Transverse colon (tissue), 4 donors: ENCODE measurements at regions of chr11 and their contacts with region 1.

Region 1: DNA sequence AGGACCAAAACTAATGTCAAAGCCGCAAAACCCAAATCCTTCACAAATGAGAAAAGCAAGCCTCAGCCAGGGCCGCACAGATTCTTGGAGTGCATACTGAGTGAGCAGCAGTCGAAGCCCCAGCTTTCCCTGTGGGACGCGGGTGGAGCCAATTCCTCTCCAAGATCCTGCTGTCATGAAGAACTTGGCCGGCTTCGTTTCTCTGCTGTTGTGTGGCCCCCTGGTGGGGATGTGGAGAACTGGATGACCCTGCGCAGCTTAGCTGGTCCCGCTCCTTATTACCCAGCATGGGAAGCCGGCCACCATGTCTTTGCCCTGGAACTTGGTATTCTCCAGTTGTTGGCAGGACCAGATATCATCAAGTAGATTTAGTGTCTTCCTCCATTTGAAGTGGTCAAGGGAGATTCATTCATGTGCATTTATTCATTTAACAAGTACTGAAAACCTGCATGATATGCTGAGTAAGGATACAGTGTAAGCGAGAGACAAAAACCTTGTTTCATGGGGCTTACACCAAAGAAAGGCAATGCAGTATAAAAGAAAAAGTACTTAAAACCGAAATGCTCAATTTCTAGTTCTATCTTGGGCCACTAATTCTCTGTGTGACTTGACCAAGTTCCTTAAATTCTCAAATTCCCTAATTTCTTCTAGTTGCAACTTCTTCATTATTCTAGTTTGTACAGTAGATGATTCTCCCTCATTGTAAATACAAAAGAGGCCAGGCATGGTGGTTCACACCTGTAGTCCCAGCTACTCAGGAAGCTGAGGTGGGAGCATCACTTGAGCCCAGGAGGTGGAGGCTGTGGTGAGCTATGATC is 56.7 kb upstream of the CRTAM start:
- DNase-seq: peak; percentile 85
- H3K4me3 ChIP-seq: no peak overlapping the region
- H3K27ac ChIP-seq: no peak overlapping the region
- H3K4me1 ChIP-seq: peaks cover 0 to 6% (median 0%) of the 10 kb centered on the region in 4 donors
- H3K27me3 ChIP-seq: no peaks in the 10 kb centered on the region
- CTCF ChIP-seq: peak; percentile 89 to 91 (median 89)
- EP300 ChIP-seq: no peak
- POLR2A ChIP-seq: no peak

Region 2: DNA sequence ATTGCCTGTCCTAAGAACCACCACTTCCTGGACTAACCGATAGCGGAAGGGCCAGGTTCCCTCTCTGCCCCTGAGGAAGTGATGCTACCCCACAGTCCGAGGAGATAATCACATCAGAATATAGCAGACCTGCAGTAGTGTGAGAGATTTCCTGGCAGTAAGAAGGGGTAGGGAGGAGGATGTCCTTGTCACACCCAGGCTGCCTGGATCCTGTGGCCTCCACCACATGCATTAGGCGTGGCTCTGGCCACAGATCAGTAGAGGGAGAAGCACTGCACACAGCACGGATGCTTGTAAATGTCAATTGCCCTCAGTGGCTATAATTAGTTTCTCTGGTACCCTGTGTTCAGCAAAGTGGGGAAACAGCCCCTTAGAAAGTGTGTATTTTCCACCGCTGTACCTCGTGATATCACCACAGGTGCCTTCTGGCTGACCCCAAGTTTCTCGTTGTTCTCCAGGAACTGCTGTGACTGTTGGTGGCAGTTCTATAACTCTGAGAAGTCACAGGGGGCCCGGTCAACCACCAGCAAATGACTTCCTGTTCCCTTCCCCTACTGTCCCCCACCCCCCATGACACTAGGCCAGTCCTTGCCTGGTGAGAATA is 64.2 kb before region 1 on chr11:
- in situ Hi-C with region 1: no loop called
- intact Hi-C with region 1: loop called (anchors 2 kb)
- DNase-seq: peak; percentile 64
- H3K4me3 ChIP-seq: no peak overlapping the region
- H3K27ac ChIP-seq: peak overlapping the region; percentile 22 to 45 (median 36)
- H3K4me1 ChIP-seq: peaks cover 0 to 19% (median 6%) of the 10 kb centered on the region in 4 donors
- H3K27me3 ChIP-seq: no peaks in the 10 kb centered on the region
- CTCF ChIP-seq: no peak
- EP300 ChIP-seq: no peak
- POLR2A ChIP-seq: no peak

Region 3: DNA sequence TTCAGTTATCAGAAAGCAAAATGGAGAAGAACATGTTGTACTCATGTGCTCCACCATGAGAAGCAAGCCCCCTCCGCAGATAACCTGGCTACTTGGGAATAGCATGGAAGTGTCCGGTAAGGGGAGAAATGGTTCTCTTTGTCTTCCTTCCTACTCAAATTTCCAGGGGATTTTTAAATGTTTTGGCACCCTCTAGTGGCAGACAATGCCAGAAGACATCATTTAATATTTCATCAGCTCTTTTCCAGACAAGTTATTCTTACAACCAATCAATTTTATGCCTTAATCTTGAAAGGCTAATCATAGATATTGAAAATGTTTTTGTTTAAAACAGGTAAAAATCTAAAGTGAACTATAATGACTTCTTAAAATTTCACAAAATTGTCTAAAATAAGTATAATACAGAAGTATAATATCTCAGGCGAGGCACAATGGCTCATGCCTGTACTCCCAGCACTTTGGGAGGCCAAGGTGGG is 72.4 kb after region 1 on chr11:
- in situ Hi-C with region 1: no loop called
- intact Hi-C with region 1: no loop called
- DNase-seq: peak; percentile 31
- H3K4me3 ChIP-seq: no peak overlapping the region
- H3K27ac ChIP-seq: no peak overlapping the region
- H3K4me1 ChIP-seq: no peaks in the 10 kb centered on the region
- H3K27me3 ChIP-seq: no peaks in the 10 kb centered on the region
- CTCF ChIP-seq: peak; percentile 65 to 72 (median 69)
- EP300 ChIP-seq: no peak
- POLR2A ChIP-seq: no peak

Region 4: DNA sequence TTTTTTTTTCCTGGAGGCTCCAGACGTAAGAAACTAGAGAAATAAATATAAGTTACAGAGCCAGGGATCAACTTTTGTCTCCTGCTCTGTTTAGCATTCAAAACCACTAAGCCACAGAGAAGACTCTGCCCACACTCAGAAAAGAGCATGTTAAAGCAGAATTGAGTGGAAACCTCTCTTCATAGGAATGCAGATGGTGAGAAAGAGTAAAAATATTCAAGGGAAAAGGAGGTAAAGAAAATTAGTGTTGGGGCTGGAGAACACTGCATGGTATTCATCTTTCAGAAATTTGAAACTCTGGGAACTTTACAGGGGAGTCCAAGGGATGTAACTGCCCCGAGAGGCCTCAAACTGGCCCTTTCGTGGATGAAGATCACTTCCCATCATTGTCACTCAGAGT is 348.3 kb after region 1 on chr11:
- in situ Hi-C with region 1: no loop called
- intact Hi-C with region 1: no loop called
- DNase-seq: no peak
- H3K4me3 ChIP-seq: no peak overlapping the region
- H3K27ac ChIP-seq: peak overlapping the region; percentile 6 to 60 (median 56)
- H3K4me1 ChIP-seq: peaks cover 0 to 5% (median 2%) of the 10 kb centered on the region in 4 donors
- H3K27me3 ChIP-seq: no peaks in the 10 kb centered on the region
- CTCF ChIP-seq: no peak
- EP300 ChIP-seq: no peak
- POLR2A ChIP-seq: no peak